A549 (cell line): ENCODE measurements at regions of chr5 and their contacts with region 1.

Region 1: DNA sequence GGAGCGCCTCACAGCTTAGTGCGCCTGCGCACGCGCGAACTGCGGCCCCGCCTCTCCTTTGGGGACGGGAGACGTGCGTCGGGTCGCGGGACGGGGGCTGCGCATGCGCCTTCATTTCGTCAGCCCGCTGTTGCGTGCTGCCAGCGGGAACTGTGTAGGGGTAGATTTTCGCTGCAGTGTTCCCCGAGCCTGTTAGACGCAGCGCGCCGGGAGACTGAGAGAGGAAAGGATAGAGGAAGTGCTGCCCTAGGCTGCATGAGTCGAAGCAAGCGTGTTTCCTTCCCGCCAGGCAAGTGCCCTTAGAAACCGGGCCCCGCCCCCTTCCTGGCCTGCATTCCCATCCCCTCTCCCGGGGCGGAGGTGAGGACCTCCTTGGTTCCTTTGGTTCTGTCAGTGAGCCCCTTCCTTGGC is 12.3 kb downstream of the ITGA1 start:
- DNase-seq: peak; percentile 82 to 94
- ATAC-seq: peak; percentile 84 to 89
- H3K4me3 ChIP-seq: peak overlapping the region; percentile 71
- H3K27ac ChIP-seq: peak overlapping the region; percentile 91 to 96
- H3K4me1 ChIP-seq: peaks cover 33% of the 10 kb centered on the region
- CTCF ChIP-seq: no peak
- EP300 ChIP-seq: no peak
- POLR2A ChIP-seq: peak; percentile 64; the same call in 1 of the 2 replicates
- RAD21 ChIP-seq: no peak; a peak in 1 of 5 replicates

Region 2: GRCh38 chr5:52915176-52915875 is 115.3 kb after region 1 on chr5:
- CTCF ChIA-PET with region 1: interaction called, 11 read pairs
- POLR2A ChIA-PET with region 1: no interaction called
- DNase-seq: peak; percentile 66 to 80
- ATAC-seq: peak; percentile 99
- H3K4me3 ChIP-seq: peak overlapping the region; percentile 37
- H3K27ac ChIP-seq: no peak overlapping the region
- H3K4me1 ChIP-seq: no peaks in the 10 kb centered on the region
- CTCF ChIP-seq: peak; percentile 97
- EP300 ChIP-seq: no peak
- POLR2A ChIP-seq: no peak
- RAD21 ChIP-seq: peak; percentile 66 to 77